A549 (cell line): ENCODE measurements at regions of chr17 and their contacts with region 1.

Region 1: GRCh38 chr17:32997753-32998632 is 6.3 kb downstream of the SPACA3 start:
- DNase-seq: peak; percentile 69 to 79
- ATAC-seq: peak; percentile 88 to 94
- H3K4me3 ChIP-seq: peak overlapping the region; percentile 28
- H3K27ac ChIP-seq: peak overlapping the region; percentile 54 to 72; a peak in 5 of 6 replicates
- H3K4me1 ChIP-seq: peaks cover 8% of the 10 kb centered on the region; the same call in 2 of the 3 replicates
- CTCF ChIP-seq: peak; percentile 92
- EP300 ChIP-seq: no peak
- POLR2A ChIP-seq: no peak
- RAD21 ChIP-seq: peak; percentile 66 to 71

Region 2: GRCh38 chr17:32870969-32871368 is 127.0 kb before region 1 on chr17:
- CTCF ChIA-PET with region 1: no interaction called
- POLR2A ChIA-PET with region 1: no interaction called
- DNase-seq: no peak
- ATAC-seq: no peak
- H3K4me3 ChIP-seq: no peak overlapping the region
- H3K27ac ChIP-seq: no peak overlapping the region
- H3K4me1 ChIP-seq: peaks cover 3% of the 10 kb centered on the region; the same call in 1 of the 3 replicates
- CTCF ChIP-seq: no peak
- EP300 ChIP-seq: no peak
- POLR2A ChIP-seq: no peak
- RAD21 ChIP-seq: no peak

Region 3: GRCh38 chr17:33012522-33013033 is 14.6 kb after region 1 on chr17:
- CTCF ChIA-PET with region 1: interaction called, 59 read pairs
- POLR2A ChIA-PET with region 1: no interaction called
- DNase-seq: peak; percentile 79 to 84
- ATAC-seq: peak; percentile 52 to 74; a peak in 4 of 6 replicates
- H3K4me3 ChIP-seq: no peak overlapping the region
- H3K27ac ChIP-seq: peak overlapping the region; percentile 77 to 91
- H3K4me1 ChIP-seq: peaks cover 37% of the 10 kb centered on the region
- CTCF ChIP-seq: no peak
- EP300 ChIP-seq: peak; percentile 15 to 42; a peak in 2 of 5 replicates
- POLR2A ChIP-seq: no peak
- RAD21 ChIP-seq: no peak

Region 4: DNA sequence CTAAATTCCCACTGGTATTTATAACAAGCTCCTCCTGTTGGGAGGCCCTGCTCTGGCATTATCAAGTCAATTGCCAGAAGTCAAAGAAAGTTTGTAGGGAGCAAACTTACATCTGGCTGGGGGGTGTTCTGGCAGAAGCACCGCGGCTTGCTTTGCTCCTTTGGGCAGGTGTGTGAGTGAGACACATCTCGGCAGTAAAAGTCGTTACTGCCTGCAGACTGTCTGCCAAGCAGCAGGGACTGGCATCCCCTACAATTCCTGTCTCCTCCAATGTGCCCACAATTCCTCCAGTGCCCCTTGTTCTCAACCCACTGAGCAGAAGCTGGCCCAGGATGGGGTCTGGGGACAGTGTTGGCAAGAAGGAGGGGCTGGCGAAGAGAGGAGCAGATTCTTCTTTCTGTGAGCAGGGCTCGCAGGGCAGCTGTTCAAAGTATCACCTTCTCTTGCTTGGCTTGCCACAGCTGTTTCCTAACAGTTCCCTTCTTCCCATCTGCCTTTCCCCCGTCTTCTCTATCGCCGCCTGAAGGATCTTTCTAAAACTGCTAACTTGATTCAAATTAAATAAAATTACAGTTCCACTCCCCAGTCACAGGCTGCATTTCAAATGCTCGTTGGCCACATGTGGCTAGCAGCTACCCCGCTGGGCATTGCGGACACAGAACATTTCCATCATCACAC is 23.9 kb after region 1 on chr17:
- CTCF ChIA-PET with region 1: interaction called, 22 read pairs
- POLR2A ChIA-PET with region 1: no interaction called
- DNase-seq: no peak
- ATAC-seq: peak in 1 of 2 experiments; percentile 30; a peak in 2 of 6 replicates
- H3K4me3 ChIP-seq: no peak overlapping the region
- H3K27ac ChIP-seq: no peak overlapping the region
- H3K4me1 ChIP-seq: no peaks in the 10 kb centered on the region
- CTCF ChIP-seq: no peak
- EP300 ChIP-seq: no peak
- POLR2A ChIP-seq: no peak
- RAD21 ChIP-seq: no peak